Activated naive CD4-positive, alpha-beta T cell treated with anti-CD3 and anti-CD28 coated beads for 36 hours (primary cell): ENCODE measurements at regions of chr12 and their contacts with region 1.

Region 1: DNA sequence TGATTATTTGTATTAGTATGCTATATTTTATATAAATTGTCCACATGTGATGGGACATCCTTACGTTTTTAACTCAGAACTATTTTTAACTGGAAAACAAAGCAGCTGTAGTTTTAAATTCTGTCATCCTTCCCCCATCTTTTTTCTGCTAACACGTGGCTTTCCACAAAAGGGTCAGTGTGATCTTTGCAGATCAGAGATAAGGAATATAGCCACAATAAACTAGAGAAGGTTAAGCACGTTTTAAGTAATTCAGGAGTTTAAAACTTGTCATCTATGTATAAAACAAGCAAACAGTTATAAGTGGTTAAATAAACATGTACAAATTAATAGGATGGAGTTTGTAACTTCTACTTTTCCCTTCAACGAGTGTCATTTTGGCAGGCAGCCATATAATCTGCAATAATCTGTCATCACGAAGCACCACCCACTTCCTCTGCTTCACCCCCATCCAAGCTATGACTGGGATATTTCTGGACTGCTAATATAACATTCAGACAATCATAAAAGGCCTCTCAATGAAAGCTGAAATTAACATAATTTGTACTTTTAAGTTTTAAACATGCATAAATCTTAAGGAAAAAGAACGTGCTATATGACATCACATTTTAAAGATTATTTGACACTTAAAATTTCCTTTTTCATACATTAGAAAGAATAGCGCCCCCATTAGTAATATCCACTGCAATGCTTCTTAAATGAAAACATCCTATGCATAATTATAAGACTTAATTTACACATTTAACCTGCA is 15.3 kb downstream of the TAOK3 start:
- DNase-seq: peak; percentile 78
- H3K4me3 Mint-ChIP-seq: peak overlapping the region; percentile 73
- H3K27ac Mint-ChIP-seq: peak overlapping the region; percentile 90
- H3K4me1 Mint-ChIP-seq: peaks cover 55% of the 10 kb centered on the region
- H3K27me3 Mint-ChIP-seq: no peaks in the 10 kb centered on the region

Region 2: DNA sequence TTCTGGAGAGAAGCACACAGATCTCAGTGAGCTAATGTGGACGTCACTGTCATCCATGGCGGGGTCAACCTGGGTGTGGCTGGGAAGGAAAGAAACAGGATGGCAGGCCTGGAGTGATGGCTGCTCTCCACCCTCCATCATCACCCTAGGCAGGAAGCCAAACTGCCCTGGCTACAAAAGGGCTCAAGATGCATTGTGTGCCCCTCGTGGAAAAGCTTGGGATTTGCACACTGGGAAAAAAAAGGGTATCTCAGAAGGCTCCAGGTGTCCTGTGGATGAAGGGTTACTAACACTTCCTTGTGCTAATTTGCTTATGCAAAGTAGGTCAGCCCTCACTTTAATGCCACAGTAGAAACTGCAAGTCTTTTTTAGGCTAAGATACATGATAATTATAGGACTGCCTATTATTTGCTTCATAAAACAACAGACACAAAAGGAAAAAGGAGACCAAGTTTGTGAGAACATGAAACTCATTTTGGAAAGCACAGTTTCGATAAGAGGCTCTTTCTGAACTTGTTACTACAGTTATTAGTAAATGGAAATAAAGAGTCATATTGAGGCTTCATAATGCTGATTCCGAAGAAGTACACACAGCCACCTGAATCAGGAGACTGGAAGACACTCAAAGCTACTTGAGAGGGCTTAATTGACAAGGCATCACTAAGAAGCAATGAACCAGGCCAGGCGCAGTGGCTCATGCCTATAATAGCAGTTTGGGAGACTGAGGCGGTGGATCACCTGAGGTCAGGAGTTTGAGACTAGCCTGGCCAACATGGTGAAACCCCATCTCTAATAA is 322.0 kb before region 1 on chr12:
- CTCF ChIA-PET with region 1: no interaction called
- intact Hi-C with region 1: loop called (anchors 5 kb)
- DNase-seq: peak; percentile 55
- H3K4me3 Mint-ChIP-seq: no peak overlapping the region
- H3K27ac Mint-ChIP-seq: peak overlapping the region; percentile 87
- H3K4me1 Mint-ChIP-seq: peaks cover 57% of the 10 kb centered on the region
- H3K27me3 Mint-ChIP-seq: no peaks in the 10 kb centered on the region

Region 3: DNA sequence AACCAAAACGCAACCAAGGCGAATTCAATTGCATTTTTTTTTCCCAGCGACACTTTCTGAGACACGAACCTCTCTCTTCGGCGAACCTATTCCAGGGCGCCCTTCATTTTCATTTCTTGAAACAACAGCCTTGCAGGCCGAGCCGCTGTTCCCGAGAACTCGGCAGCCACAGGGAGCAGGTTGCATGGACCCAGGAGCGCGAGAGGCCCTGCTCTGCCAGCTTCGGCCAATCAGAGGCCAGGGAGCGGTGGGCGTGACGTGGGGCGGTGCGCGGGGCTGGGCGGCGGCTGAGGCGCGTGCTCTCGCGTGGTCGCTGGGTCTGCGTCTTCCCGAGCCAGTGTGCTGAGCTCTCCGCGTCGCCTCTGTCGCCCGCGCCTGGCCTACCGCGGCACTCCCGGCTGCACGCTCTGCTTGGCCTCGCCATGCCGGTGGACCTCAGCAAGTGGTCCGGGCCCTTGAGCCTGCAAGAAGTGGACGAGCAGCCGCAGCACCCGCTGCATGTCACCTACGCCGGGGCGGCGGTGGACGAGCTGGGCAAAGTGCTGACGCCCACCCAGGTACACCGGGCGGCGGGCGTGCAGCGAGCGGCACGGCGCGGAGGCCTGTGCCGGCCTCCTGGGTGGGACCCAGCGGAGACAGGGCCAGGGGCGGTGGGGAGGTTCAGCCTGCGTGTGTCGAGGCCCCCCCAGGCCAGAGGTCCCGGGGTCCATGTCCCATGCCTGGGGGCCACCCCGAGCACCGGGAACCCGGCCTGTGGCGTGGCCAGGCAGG is 221.5 kb before region 1 on chr12 and contains the start of gene PEBP1:
- CTCF ChIA-PET with region 1: no interaction called
- intact Hi-C with region 1: loop called (anchors 5 kb)
- DNase-seq: peak; percentile 95
- H3K4me3 Mint-ChIP-seq: peak within 1 kb of the TSS; percentile 98
- H3K27ac Mint-ChIP-seq: peak within 1 kb of the TSS; percentile 83
- H3K4me1 Mint-ChIP-seq: peaks cover 31% of the 10 kb centered on the region
- H3K27me3 Mint-ChIP-seq: no peaks in the 10 kb centered on the region
- total RNA-seq, gene PEBP1: 117 to 120 TPM

Region 4: GRCh38 chr12:118249547-118249946 is 107.9 kb before region 1 on chr12:
- CTCF ChIA-PET with region 1: no interaction called
- intact Hi-C with region 1: no loop called
- DNase-seq: no peak
- H3K4me3 Mint-ChIP-seq: no peak overlapping the region
- H3K27ac Mint-ChIP-seq: no peak overlapping the region
- H3K4me1 Mint-ChIP-seq: no peaks in the 10 kb centered on the region
- H3K27me3 Mint-ChIP-seq: no peaks in the 10 kb centered on the region

Region 5: GRCh38 chr12:118307069-118307954 is 50.1 kb before region 1 on chr12:
- CTCF ChIA-PET with region 1: interaction called, 3 read pairs
- intact Hi-C with region 1: loop called (anchors 1 kb)
- DNase-seq: peak; percentile 66
- H3K4me3 Mint-ChIP-seq: peak overlapping the region; percentile 41
- H3K27ac Mint-ChIP-seq: peak overlapping the region; percentile 47
- H3K4me1 Mint-ChIP-seq: peaks cover 37% of the 10 kb centered on the region
- H3K27me3 Mint-ChIP-seq: no peaks in the 10 kb centered on the region

Region 6: DNA sequence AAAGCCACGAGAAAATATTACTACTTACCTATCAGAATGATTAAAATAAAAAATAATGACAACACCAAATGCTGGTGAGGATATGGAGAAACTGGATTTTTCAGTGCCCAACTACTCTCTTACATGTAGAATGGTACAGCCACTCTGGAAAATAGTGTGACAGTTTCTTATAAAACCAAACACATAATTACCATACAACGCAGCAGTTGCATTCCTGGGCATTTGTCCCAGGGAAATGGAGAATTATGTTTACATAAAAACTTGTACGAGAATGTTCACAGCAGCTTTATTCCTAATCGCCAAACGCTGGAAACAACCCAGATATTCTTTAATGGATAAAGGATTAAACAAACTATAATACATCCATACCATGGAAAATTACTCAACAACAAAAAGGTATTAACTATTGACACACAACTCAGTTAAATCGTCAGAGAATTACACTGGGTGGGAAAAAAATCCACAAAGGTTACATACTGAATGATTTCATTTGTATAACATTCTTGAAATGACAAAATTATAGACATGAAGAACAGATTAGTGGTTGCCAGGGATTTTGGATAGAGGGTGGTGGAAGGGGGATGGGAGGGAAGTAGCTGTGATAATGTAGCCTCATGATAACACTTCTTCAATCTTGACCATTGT is 20.1 kb before region 1 on chr12:
- CTCF ChIA-PET with region 1: no interaction called
- intact Hi-C with region 1: loop called (anchors 2 kb)
- DNase-seq: no peak
- H3K4me3 Mint-ChIP-seq: no peak overlapping the region
- H3K27ac Mint-ChIP-seq: no peak overlapping the region
- H3K4me1 Mint-ChIP-seq: peaks cover 36% of the 10 kb centered on the region
- H3K27me3 Mint-ChIP-seq: no peaks in the 10 kb centered on the region